ENCODE measurements at regions of chr1 and their contacts with region 1.

Region 1: DNA sequence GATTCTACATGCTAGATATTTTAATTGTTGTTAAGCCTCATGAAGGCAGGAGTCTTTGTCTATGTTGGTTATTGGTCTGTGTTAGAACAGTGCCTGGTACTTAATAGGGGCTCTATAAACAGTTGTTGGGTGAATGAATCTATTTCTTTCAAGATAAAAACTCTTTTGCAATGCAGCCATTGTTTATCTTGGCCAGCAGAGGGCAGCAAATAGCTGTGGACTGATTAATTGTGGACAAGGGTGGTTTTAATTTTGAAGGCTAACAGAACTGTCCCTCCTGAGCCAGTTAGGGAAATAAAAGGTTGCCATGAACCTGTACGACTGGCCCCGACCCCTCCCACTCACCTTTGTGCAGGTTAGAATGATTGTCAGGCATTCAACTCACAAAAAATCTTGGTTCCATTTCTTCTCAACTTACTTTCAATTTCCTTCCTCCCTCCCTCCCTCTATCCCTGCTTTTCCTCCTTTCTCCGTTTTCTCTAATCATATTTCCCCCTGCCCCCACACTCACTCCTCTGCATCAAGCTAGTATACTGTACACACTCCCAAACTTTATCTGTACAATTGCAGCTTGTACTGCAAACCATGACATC is 66.3 kb upstream of the DIRAS3 start:
- DNase-seq: no peak
- H3K4me3 ChIP-seq: peak overlapping the region in 2 of 3 donors; percentile 26 to 54
- H3K27ac ChIP-seq: peak overlapping the region in 1 of 2 donors; percentile 12
- H3K4me1 ChIP-seq: no peaks in the 10 kb centered on the region
- H3K27me3 ChIP-seq: no peaks in the 10 kb centered on the region
- CTCF ChIP-seq: peak; percentile 79 to 94 (median 86)
- POLR2A ChIP-seq: no peak

Region 2: DNA sequence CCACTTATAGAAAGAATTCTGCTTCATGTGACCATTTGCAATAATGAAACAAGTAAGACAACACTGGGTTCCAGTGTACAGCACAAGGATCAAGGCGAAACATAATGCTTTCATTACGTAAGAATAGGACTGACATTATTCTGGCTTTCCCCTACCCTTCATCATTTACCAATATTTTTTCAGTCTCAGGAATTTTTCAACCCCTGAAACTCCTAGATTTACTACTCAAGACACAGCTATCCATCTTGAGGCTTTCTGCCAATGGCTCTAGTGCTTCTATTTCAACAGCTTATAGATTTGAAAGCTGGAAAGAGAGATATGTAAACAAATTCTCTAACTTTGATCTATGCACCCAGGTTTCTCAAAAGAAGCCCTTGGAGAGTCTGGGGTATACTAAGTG is 67.2 kb after region 1 on chr1:
- intact Hi-C with region 1: loop called (anchors 2 kb)
- DNase-seq: no peak
- H3K4me3 ChIP-seq: no peak overlapping the region
- H3K27ac ChIP-seq: no peak overlapping the region
- H3K4me1 ChIP-seq: no peaks in the 10 kb centered on the region
- H3K27me3 ChIP-seq: no peaks in the 10 kb centered on the region
- CTCF ChIP-seq: no peak
- POLR2A ChIP-seq: no peak

Region 3: GRCh38 chr1:68346188-68346808 is 229.6 kb after region 1 on chr1:
- intact Hi-C with region 1: loop called (anchors 5 kb)
- DNase-seq: no peak
- H3K4me3 ChIP-seq: no peak overlapping the region
- H3K27ac ChIP-seq: no peak overlapping the region
- H3K4me1 ChIP-seq: no peaks in the 10 kb centered on the region
- H3K27me3 ChIP-seq: no peaks in the 10 kb centered on the region
- CTCF ChIP-seq: peak; percentile 33 to 61 (median 60)
- POLR2A ChIP-seq: no peak

Measured in breast epithelium (tissue), 4 donors.